ENCODE measurements at regions of chr5 and their contacts with region 1.

Region 1: DNA sequence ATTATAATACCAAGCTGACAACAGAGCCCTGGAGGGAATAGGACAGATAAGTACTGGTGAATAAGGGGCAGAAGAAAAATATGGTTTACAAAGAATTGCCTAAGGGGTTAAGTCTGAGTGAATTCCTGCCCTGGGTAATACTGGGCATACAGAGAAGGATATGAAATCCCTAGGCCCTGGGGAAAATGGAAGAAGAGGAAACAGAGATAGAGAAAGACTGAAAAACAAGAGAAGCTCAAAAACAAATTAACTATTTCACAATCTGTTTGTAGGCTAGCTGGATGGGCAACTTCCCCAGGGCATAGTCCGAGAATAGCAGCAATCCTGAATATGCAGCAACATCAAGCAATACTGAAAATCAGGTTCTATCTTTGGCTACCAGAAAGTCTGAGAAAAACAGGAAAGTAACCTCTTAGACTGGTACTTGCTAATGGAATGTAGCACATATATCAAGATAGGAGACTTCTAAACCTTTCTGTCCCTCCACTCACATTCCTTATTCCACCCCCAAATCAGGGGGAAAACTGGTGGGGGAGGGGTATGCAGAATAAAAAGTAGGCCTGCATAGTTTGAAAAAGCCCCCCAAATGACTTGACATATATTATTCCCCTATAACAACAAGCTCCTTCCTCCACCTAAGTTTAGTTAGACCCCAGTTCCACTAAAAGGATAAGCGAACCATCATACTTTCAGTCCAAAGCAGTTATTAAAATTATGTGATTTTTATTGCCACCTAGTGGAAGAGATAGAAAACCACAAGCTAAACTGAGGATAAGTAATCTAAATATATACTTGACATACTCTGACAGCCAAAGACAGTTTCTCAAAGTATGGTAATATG is 20.6 kb downstream of the SLC38A9 start:
- DNase-seq: peak in 2 of 9 experiments; percentile 33 to 52
- ATAC-seq: peak; percentile 65
- H3K4me3 ChIP-seq: no peak overlapping the region
- H3K4me3 Mint-ChIP-seq: no peak overlapping the region
- H3K27ac ChIP-seq: no peak overlapping the region
- H3K27ac Mint-ChIP-seq: no peak overlapping the region
- H3K4me1 ChIP-seq: no peaks in the 10 kb centered on the region
- H3K4me1 Mint-ChIP-seq: peaks cover 2% of the 10 kb centered on the region
- H3K27me3 ChIP-seq: no peaks in the 10 kb centered on the region
- H3K27me3 Mint-ChIP-seq: no peaks in the 10 kb centered on the region
- CTCF ChIP-seq: peak; percentile 62

Region 2: GRCh38 chr5:55324815-55325418 is 366.6 kb before region 1 on chr5:
- CTCF ChIA-PET with region 1: no interaction called
- POLR2A ChIA-PET with region 1: no interaction called
- intact Hi-C with region 1: loop called in 1 of 2 experiments (anchors 5 kb)
- DNase-seq: peak in 2 of 9 experiments; percentile 45 to 56
- ATAC-seq: peak; percentile 71
- H3K4me3 ChIP-seq: no peak overlapping the region
- H3K4me3 Mint-ChIP-seq: no peak overlapping the region
- H3K27ac ChIP-seq: no peak overlapping the region
- H3K27ac Mint-ChIP-seq: no peak overlapping the region
- H3K4me1 ChIP-seq: no peaks in the 10 kb centered on the region
- H3K4me1 Mint-ChIP-seq: peaks cover 35% of the 10 kb centered on the region
- H3K27me3 ChIP-seq: no peaks in the 10 kb centered on the region
- H3K27me3 Mint-ChIP-seq: no peaks in the 10 kb centered on the region
- CTCF ChIP-seq: peak; percentile 67

Region 3: GRCh38 chr5:55344392-55344992 is 347.0 kb before region 1 on chr5:
- CTCF ChIA-PET with region 1: interaction called, 11 read pairs
- POLR2A ChIA-PET with region 1: no interaction called
- intact Hi-C with region 1: loop called (anchors 1 kb)
- DNase-seq: peak; percentile 36 to 73 (median 64)
- ATAC-seq: peak; percentile 76
- H3K4me3 ChIP-seq: no peak overlapping the region
- H3K4me3 Mint-ChIP-seq: no peak overlapping the region
- H3K27ac ChIP-seq: no peak overlapping the region
- H3K27ac Mint-ChIP-seq: no peak overlapping the region
- H3K4me1 ChIP-seq: no peaks in the 10 kb centered on the region
- H3K4me1 Mint-ChIP-seq: no peaks in the 10 kb centered on the region
- H3K27me3 ChIP-seq: no peaks in the 10 kb centered on the region
- H3K27me3 Mint-ChIP-seq: no peaks in the 10 kb centered on the region
- CTCF ChIP-seq: peak; percentile 97

Region 4: DNA sequence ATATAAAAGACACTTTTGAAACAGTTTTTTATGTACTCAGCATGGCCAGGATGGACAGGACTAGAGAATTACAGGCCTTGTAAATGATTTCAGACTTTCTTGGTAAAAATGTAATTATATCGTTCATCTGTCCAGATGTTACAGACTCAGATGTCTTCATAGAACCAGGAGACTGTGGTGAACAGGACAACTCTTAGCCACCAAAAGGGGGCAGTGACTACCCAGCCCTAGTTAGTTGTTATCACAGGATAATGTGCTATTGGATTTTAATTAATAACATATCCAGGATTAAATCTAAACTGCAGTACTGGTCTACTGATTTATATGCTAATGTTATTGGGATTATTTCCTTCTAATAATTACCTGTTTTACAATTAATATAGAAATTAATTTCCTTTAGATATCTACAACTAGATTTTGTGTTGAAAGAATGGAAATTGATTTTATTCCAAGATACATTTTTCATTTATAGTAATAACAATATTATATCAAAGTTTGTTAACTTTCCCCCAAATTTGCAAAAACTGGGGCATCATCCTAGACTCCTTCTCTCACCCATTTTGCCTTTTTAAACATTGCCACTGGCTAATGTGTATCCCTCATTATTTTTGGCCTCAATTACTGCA is 284.3 kb before region 1 on chr5:
- CTCF ChIA-PET with region 1: interaction called, 18 read pairs
- POLR2A ChIA-PET with region 1: no interaction called
- intact Hi-C with region 1: loop called (anchors 1 kb)
- DNase-seq: peak in 2 of 9 experiments; percentile 26 to 49
- ATAC-seq: peak; percentile 44
- H3K4me3 ChIP-seq: no peak overlapping the region
- H3K4me3 Mint-ChIP-seq: no peak overlapping the region
- H3K27ac ChIP-seq: no peak overlapping the region
- H3K27ac Mint-ChIP-seq: peak overlapping the region; percentile 43
- H3K4me1 ChIP-seq: peaks cover 7% of the 10 kb centered on the region
- H3K4me1 Mint-ChIP-seq: peaks cover 11% of the 10 kb centered on the region
- H3K27me3 ChIP-seq: no peaks in the 10 kb centered on the region
- H3K27me3 Mint-ChIP-seq: no peaks in the 10 kb centered on the region
- CTCF ChIP-seq: peak; percentile 21